Esophagus squamous epithelium (tissue), 5 donors: ENCODE measurements at regions of chr22 and their contacts with region 1.

Region 1: GRCh38 chr22:32991353-32992121 is 66.6 kb downstream of the SYN3 start:
- DNase-seq: no peak
- H3K4me3 ChIP-seq: no peak overlapping the region
- H3K27ac ChIP-seq: peak overlapping the region in 3 of 4 donors; percentile 10 to 68 (median 31)
- H3K4me1 ChIP-seq: peaks cover 6 to 62% (median 26%) of the 10 kb centered on the region in 3 donors
- H3K27me3 ChIP-seq: peaks cover 0 to 3% (median 0%) of the 10 kb centered on the region in 4 donors
- CTCF ChIP-seq: no peak
- POLR2A ChIP-seq: no peak

Region 2: GRCh38 chr22:32649515-32650200 is 341.9 kb before region 1 on chr22:
- intact Hi-C with region 1: loop called (anchors 10 kb)
- DNase-seq: no peak
- H3K4me3 ChIP-seq: no peak overlapping the region
- H3K27ac ChIP-seq: peak overlapping the region; percentile 8 to 78 (median 56)
- H3K4me1 ChIP-seq: peaks cover 1 to 4% (median 4%) of the 10 kb centered on the region in 3 donors
- H3K27me3 ChIP-seq: no peaks in the 10 kb centered on the region
- CTCF ChIP-seq: no peak
- POLR2A ChIP-seq: no peak

Region 3: GRCh38 chr22:32852395-32853251 is 138.9 kb before region 1 on chr22:
- intact Hi-C with region 1: no loop called
- DNase-seq: no peak
- H3K4me3 ChIP-seq: no peak overlapping the region
- H3K27ac ChIP-seq: peak overlapping the region in 3 of 4 donors; percentile 80 to 92 (median 80)
- H3K4me1 ChIP-seq: peaks cover 0 to 76% (median 42%) of the 10 kb centered on the region in 3 donors
- H3K27me3 ChIP-seq: peaks cover 0 to 8% (median 0%) of the 10 kb centered on the region in 4 donors
- CTCF ChIP-seq: no peak
- POLR2A ChIP-seq: no peak